MCF 10A (cell line): ENCODE measurements at regions of chr21 and their contacts with region 1.

Region 1: DNA sequence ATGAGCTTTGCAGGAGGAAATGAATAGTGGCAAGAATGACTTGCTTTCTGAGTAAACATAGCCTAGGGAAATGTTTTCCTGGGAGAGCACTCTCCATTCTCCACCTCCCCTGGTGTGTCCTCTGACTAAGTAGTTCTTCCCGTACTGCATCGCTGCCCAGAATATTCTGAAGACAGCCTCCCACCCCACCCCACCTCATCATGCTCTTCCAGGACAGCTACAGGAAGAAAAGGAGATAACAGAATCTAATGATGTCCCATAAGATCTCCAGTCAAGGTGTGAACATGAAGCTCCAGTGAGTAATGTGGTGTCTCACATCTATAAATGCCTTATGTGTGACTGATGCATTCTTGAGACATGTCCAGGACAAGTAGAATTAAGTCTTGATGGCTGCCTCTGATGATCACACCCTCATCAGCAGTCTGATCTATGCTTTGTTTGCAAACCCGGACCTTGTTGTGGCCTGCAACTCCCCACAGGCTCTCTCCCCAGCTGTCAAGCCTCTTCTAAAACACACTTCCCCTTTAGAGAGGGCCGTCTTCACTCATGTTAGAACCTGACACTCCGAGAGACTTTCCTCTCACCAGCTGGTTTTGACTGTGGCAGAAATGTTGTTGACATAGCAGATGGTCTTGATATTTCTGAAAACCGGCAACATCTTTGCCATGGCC is 183.0 kb downstream of the CYYR1 start:
- DNase-seq: peak; percentile 75
- H3K4me3 Mint-ChIP-seq: peak overlapping the region; percentile 28
- H3K27ac Mint-ChIP-seq: peak overlapping the region; percentile 93
- H3K4me1 Mint-ChIP-seq: peaks cover 48% of the 10 kb centered on the region
- H3K27me3 Mint-ChIP-seq: no peaks in the 10 kb centered on the region
- CTCF ChIP-seq: no peak

Region 2: GRCh38 chr21:26199456-26199855 is 190.7 kb before region 1 on chr21:
- CTCF ChIA-PET with region 1: no interaction called
- POLR2A ChIA-PET with region 1: interaction called, 14 read pairs
- intact Hi-C with region 1: no loop called
- DNase-seq: peak; percentile 46
- H3K4me3 Mint-ChIP-seq: peak overlapping the region; percentile 27
- H3K27ac Mint-ChIP-seq: peak overlapping the region; percentile 71
- H3K4me1 Mint-ChIP-seq: peaks cover 12% of the 10 kb centered on the region
- H3K27me3 Mint-ChIP-seq: no peaks in the 10 kb centered on the region
- CTCF ChIP-seq: no peak

Region 3: GRCh38 chr21:26405735-26406361 is 15.7 kb after region 1 on chr21:
- CTCF ChIA-PET with region 1: interaction called, 3 read pairs
- POLR2A ChIA-PET with region 1: interaction called, 16 read pairs
- intact Hi-C with region 1: no loop called
- DNase-seq: peak; percentile 85
- H3K4me3 Mint-ChIP-seq: peak overlapping the region; percentile 67
- H3K27ac Mint-ChIP-seq: peak overlapping the region; percentile 9
- H3K4me1 Mint-ChIP-seq: peaks cover 14% of the 10 kb centered on the region
- H3K27me3 Mint-ChIP-seq: no peaks in the 10 kb centered on the region
- CTCF ChIP-seq: no peak

Region 4: DNA sequence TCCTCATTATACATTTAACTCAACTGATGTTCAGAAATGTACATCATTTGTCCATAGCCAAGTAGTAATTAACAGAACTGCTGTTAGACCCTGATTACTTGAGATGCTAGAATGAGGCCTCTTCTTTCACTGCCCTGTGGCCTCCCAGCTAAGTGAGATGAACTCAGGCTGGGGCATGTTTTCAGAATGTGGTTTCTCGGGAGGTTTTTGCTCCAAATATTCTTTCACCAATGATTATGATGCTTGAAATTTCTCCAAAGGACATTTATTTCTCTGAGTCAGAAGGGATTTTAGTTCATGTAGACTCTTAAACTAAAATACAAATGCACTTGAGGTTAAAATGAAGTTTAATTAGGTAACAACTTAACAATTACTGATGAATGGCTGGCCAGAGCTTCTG is 611.4 kb after region 1 on chr21:
- CTCF ChIA-PET with region 1: no interaction called
- POLR2A ChIA-PET with region 1: no interaction called
- intact Hi-C with region 1: no loop called
- DNase-seq: no peak
- H3K4me3 Mint-ChIP-seq: no peak overlapping the region
- H3K27ac Mint-ChIP-seq: no peak overlapping the region
- H3K4me1 Mint-ChIP-seq: no peaks in the 10 kb centered on the region
- H3K27me3 Mint-ChIP-seq: no peaks in the 10 kb centered on the region
- CTCF ChIP-seq: no peak

Region 5: DNA sequence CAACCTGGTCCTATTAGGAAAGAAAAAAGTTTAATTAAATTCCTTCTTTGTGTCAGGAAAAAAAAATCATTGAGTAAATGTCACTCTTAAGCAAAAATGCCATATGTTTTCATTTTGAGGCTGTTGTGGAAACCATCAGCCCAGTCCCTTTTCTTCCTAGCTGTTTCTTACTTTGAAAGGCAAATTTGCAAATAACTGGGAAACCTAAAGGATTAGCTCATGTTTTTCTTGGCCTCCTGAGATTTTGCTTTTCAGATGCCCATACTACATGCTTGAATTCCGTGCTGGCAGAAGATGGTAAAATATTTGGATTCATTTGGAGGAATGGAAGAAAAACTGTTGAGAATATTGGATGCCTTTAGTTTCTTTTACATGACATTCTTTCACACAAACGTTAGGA is 758.9 kb after region 1 on chr21:
- CTCF ChIA-PET with region 1: no interaction called
- POLR2A ChIA-PET with region 1: no interaction called
- intact Hi-C with region 1: no loop called
- DNase-seq: no peak
- H3K4me3 Mint-ChIP-seq: no peak overlapping the region
- H3K27ac Mint-ChIP-seq: no peak overlapping the region
- H3K4me1 Mint-ChIP-seq: no peaks in the 10 kb centered on the region
- H3K27me3 Mint-ChIP-seq: no peaks in the 10 kb centered on the region
- CTCF ChIP-seq: no peak